OCI-LY7 (cell line): ENCODE measurements at regions of chr12 and their contacts with region 1.

Region 1: DNA sequence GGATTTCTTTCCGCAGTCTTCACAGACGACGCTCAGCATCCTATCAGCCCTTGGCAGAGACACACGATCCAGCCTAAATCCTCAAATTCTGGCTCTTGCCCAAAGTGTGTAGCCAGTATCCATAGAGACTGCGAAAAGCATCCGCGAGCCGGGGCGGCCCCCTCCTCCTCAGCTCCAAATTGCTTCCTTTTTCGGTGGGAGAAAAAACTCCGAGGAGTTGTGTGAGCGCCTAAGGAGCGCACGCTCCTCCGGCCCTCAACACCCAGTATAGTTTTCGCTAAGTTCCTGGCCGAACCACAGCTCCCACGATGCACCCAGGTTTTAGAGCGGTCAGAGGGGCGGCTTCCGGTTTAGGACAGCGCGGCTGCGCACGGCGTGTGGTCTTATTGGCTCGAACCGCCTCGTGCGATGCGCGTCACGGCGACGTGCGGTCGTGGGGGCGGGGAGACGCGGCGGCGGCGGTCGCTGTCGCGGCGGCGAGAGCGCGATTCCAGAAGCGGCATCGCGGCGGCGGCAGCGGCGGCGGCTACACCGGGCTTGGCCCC is at the start of gene ADIPOR2:
- DNase-seq: peak; percentile 99
- H3K4me3 ChIP-seq: peak within 1 kb of the TSS; percentile 93
- H3K27ac ChIP-seq: peak within 1 kb of the TSS; percentile 78
- H3K4me1 ChIP-seq: peaks cover 32% of the 10 kb centered on the region
- CTCF ChIP-seq: no peak
- total RNA-seq, gene ADIPOR2: 22.0 and 24.7 TPM in 2 replicates

Region 2: DNA sequence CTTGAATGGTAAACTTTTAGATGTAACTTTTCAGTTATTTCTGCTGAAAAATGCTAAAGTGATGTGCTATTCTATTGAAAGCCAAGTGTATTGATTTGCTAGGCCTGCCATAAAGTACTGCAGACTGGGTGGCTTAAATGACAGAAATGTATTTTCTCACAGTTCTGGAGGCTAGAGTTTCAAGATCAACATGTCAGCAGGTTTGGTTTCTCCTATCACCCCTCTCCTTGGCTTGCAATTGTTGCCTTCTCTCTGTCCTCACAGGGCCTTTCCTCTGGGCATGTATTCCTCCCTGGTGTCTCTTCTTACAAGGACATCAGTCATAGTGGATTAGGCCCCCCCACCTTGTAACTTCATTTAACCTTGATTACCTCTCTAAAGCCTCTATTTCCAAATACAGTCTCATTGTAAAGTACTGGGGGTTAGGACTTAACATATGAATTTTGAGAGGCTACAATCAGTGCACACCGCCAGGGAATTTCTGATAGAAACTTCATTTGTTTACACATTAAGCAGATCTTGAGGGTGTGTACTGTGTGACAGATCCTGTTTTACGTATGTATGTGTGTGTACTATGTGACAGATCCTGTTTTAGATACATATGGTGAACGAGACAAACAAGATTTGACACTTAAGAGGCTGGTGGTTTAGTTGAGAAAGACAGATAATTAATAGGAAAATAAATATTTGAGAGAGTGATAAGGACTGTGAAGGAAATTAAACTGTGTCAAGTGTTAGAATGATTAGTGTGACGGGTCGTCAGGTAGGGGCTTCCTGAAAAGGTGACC is 49.7 kb after region 1 on chr12:
- CTCF ChIA-PET with region 1: no interaction called
- POLR2A ChIA-PET with region 1: interaction called, 5 read pairs
- intact Hi-C with region 1: loop called (anchors 5 kb)
- DNase-seq: no peak
- H3K4me3 ChIP-seq: no peak overlapping the region
- H3K27ac ChIP-seq: no peak overlapping the region
- H3K4me1 ChIP-seq: peaks cover 17% of the 10 kb centered on the region
- CTCF ChIP-seq: no peak

Region 3: GRCh38 chr12:2057041-2057794 is 366.6 kb after region 1 on chr12:
- CTCF ChIA-PET with region 1: no interaction called
- POLR2A ChIA-PET with region 1: no interaction called
- intact Hi-C with region 1: no loop called
- DNase-seq: peak; percentile 78
- H3K4me3 ChIP-seq: no peak overlapping the region
- H3K27ac ChIP-seq: no peak overlapping the region
- H3K4me1 ChIP-seq: no peaks in the 10 kb centered on the region
- CTCF ChIP-seq: peak; percentile 93